ENCODE measurements at regions of chr1 and their contacts with region 1.

Region 1: DNA sequence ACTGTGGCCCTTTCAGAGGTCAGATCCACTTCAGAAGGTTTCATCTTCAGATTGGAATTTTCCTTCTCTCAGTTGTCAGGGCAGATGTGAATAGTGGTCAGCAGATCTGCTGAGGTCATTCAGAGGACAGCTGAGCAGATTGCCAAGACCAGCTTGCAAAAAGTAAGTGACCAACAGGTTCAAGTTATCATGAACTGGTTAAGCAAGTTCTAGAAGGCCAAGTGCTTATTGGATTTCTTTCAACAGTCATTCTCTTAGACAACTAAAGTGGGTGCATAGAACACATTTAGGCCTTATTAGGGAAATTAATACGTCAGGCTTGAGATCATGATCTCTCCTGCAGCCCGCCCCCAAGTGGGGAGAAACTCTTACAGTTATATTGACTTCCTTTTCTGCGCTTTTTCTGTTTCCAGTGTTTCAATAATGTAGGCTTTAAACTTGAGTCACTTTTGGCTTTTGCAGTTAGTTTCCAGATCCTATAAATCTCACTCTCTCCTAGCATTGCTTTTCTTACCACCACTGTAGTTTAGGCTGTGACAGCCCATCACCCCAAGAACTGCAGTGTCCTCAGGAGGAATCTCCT is 96.4 kb downstream of the C1orf21 start:
- DNase-seq: peak; percentile 62
- H3K4me3 Mint-ChIP-seq: peak overlapping the region; percentile 13
- H3K27ac Mint-ChIP-seq: peak overlapping the region; percentile 79
- H3K4me1 Mint-ChIP-seq: peaks cover 73% of the 10 kb centered on the region
- H3K27me3 Mint-ChIP-seq: no peaks in the 10 kb centered on the region
- CTCF ChIP-seq: peak; percentile 39

Region 2: GRCh38 chr1:184075055-184076029 is 407.9 kb before region 1 on chr1:
- CTCF ChIA-PET with region 1: no interaction called
- intact Hi-C with region 1: loop called (anchors 10 kb)
- DNase-seq: peak; percentile 50
- H3K4me3 Mint-ChIP-seq: no peak overlapping the region
- H3K27ac Mint-ChIP-seq: no peak overlapping the region
- H3K4me1 Mint-ChIP-seq: no peaks in the 10 kb centered on the region
- H3K27me3 Mint-ChIP-seq: no peaks in the 10 kb centered on the region
- CTCF ChIP-seq: peak; percentile 51

Region 3: GRCh38 chr1:184242507-184242943 is 240.7 kb before region 1 on chr1:
- CTCF ChIA-PET with region 1: no interaction called
- intact Hi-C with region 1: loop called (anchors 10 kb)
- DNase-seq: no peak
- H3K4me3 Mint-ChIP-seq: no peak overlapping the region
- H3K27ac Mint-ChIP-seq: no peak overlapping the region
- H3K4me1 Mint-ChIP-seq: peaks cover 14% of the 10 kb centered on the region
- H3K27me3 Mint-ChIP-seq: peaks cover 41% of the 10 kb centered on the region
- CTCF ChIP-seq: no peak

Region 4: DNA sequence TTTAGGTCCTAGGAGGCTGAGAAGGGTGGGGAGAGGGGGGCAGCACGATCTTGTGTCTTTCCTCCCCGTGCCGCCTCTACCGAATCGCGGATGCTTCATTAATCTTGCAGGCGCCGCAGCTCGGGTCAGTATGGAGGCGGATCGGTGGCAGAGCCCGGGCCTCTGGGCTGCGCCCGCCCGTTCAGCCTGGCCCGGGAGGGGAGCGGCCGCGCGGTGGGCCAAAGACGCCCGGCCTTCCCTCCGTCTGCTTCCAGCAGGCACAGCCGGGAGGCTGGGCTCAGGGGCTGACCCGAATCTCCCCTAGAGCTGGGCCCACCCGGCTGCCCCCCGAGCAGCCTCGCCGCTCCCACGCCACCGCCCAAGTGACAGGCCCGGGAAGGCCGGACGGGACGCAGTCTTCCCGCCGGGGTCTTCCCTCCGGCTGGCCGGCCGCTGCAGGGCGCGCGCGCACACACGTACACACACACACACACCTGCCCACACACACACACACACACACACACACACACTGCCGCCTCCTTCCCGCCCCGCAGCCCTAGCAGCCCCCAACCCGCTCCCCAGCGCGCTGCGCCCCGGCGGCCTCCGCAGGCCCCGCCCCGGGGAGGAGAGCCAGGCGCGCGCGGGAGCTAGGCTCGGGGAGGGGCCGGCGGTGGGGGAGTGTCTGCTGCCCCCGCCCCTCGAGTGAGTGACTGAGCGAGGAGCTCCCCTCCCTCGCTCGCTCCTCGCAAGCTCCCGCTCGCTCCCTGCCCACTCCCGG is 96.7 kb before region 1 on chr1 and contains the start of gene C1orf21:
- CTCF ChIA-PET with region 1: interaction called, 4 read pairs
- intact Hi-C with region 1: loop called (anchors 2 kb)
- DNase-seq: peak; percentile 93
- H3K4me3 Mint-ChIP-seq: peak within 1 kb of the TSS; percentile 76
- H3K27ac Mint-ChIP-seq: peak within 1 kb of the TSS; percentile 19
- H3K4me1 Mint-ChIP-seq: peaks cover 19% of the 10 kb centered on the region
- H3K27me3 Mint-ChIP-seq: no peaks in the 10 kb centered on the region
- CTCF ChIP-seq: no peak
- total RNA-seq, gene C1orf21: 16.9 and 20.6 TPM in 2 replicates

Region 5: GRCh38 chr1:184407816-184408537 is 75.2 kb before region 1 on chr1:
- CTCF ChIA-PET with region 1: interaction called, 3 read pairs
- intact Hi-C with region 1: loop called (anchors 5 kb)
- DNase-seq: no peak
- H3K4me3 Mint-ChIP-seq: peak overlapping the region; percentile 53
- H3K27ac Mint-ChIP-seq: peak overlapping the region; percentile 59
- H3K4me1 Mint-ChIP-seq: peaks cover 47% of the 10 kb centered on the region
- H3K27me3 Mint-ChIP-seq: no peaks in the 10 kb centered on the region
- CTCF ChIP-seq: no peak

Region 6: GRCh38 chr1:184419728-184420161 is 63.4 kb before region 1 on chr1:
- CTCF ChIA-PET with region 1: no interaction called
- intact Hi-C with region 1: no loop called
- DNase-seq: peak; percentile 33
- H3K4me3 Mint-ChIP-seq: no peak overlapping the region
- H3K27ac Mint-ChIP-seq: peak overlapping the region; percentile 4
- H3K4me1 Mint-ChIP-seq: peaks cover 37% of the 10 kb centered on the region
- H3K27me3 Mint-ChIP-seq: no peaks in the 10 kb centered on the region
- CTCF ChIP-seq: no peak